Natural killer cell (primary cell): ENCODE measurements at regions of chr10 and their contacts with region 1.

Region 1: GRCh38 chr10:6314620-6315205 is 112.0 kb downstream of the PFKFB3 start:
- DNase-seq: no peak
- ATAC-seq: no peak
- H3K4me3 ChIP-seq: no peak overlapping the region
- H3K4me3 Mint-ChIP-seq: no peak overlapping the region
- H3K27ac ChIP-seq: no peak overlapping the region
- H3K27ac Mint-ChIP-seq: no peak overlapping the region
- H3K4me1 ChIP-seq: no peaks in the 10 kb centered on the region
- H3K4me1 Mint-ChIP-seq: no peaks in the 10 kb centered on the region
- H3K27me3 ChIP-seq: no peaks in the 10 kb centered on the region
- H3K27me3 Mint-ChIP-seq: peaks cover 8 to 11% of the 10 kb centered on the region in 2 donors
- CTCF ChIP-seq: no peak

Region 2: GRCh38 chr10:6379015-6379776 is 64.5 kb after region 1 on chr10:
- intact Hi-C with region 1: loop called (anchors 10 kb)
- DNase-seq: no peak
- ATAC-seq: no peak
- H3K4me3 ChIP-seq: no peak overlapping the region
- H3K4me3 Mint-ChIP-seq: no peak overlapping the region
- H3K27ac ChIP-seq: no peak overlapping the region
- H3K27ac Mint-ChIP-seq: no peak overlapping the region
- H3K4me1 ChIP-seq: peaks cover 3% of the 10 kb centered on the region
- H3K4me1 Mint-ChIP-seq: peaks cover 0 to 14% of the 10 kb centered on the region in 2 donors
- H3K27me3 ChIP-seq: no peaks in the 10 kb centered on the region
- H3K27me3 Mint-ChIP-seq: peaks cover 0 to 15% of the 10 kb centered on the region in 2 donors
- CTCF ChIP-seq: no peak

Region 3: GRCh38 chr10:6416892-6417512 is 102.3 kb after region 1 on chr10:
- intact Hi-C with region 1: no loop called
- DNase-seq: peak in 1 of 2 donors; percentile 79
- ATAC-seq: peak; percentile 56 to 80 (median 72)
- H3K4me3 ChIP-seq: no peak overlapping the region
- H3K4me3 Mint-ChIP-seq: no peak overlapping the region
- H3K27ac ChIP-seq: no peak overlapping the region
- H3K27ac Mint-ChIP-seq: no peak overlapping the region
- H3K4me1 ChIP-seq: no peaks in the 10 kb centered on the region
- H3K4me1 Mint-ChIP-seq: no peaks in the 10 kb centered on the region
- H3K27me3 ChIP-seq: no peaks in the 10 kb centered on the region
- H3K27me3 Mint-ChIP-seq: no peaks in the 10 kb centered on the region
- CTCF ChIP-seq: peak; percentile 69

Region 4: DNA sequence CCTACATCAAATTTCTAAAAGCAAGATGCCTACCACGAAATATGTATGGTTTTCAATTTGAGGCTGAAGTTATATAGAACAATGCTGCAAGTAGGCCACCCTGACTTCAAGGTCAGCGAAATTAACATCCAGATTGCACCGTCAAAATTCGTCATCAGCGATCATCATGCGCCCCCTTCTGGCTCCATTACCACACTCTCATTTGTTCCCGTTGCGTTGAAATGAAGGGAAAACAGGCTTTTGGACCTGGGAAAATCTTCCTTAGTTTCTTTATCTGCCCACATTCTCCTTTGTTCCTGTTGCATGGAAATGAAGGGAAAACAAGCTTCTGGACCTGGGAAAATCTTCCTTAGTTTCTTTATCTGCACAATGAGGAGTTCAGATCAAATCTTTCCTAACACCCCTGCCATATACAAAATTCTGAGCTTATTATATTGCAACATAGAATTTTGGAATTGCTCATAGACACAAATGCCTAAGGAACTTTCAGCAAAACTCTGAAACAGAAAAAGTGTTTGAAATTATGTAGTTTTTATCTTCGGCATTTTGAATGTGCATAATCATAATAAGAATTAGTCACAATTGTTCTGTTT is 363.6 kb after region 1 on chr10:
- intact Hi-C with region 1: no loop called
- DNase-seq: peak; percentile 44 to 84
- ATAC-seq: peak; percentile 56 to 69 (median 67)
- H3K4me3 ChIP-seq: no peak overlapping the region
- H3K4me3 Mint-ChIP-seq: no peak overlapping the region
- H3K27ac ChIP-seq: no peak overlapping the region
- H3K27ac Mint-ChIP-seq: no peak overlapping the region
- H3K4me1 ChIP-seq: no peaks in the 10 kb centered on the region
- H3K4me1 Mint-ChIP-seq: peaks cover 4 to 5% of the 10 kb centered on the region in 2 donors
- H3K27me3 ChIP-seq: peaks cover 4% of the 10 kb centered on the region
- H3K27me3 Mint-ChIP-seq: peaks cover 19 to 52% of the 10 kb centered on the region in 2 donors
- CTCF ChIP-seq: peak; percentile 78